Activated CD4-positive, alpha-beta memory T cell treated with anti-CD3 and anti-CD28 coated beads for 36 hours (primary cell): ENCODE measurements at regions of chr13 and their contacts with region 1.

Region 1: GRCh38 chr13:50081679-50082425 is 66.6 kb downstream of the KCNRG start:
- DNase-seq: peak; percentile 99
- H3K4me3 Mint-ChIP-seq: peak overlapping the region; percentile 99
- H3K27ac Mint-ChIP-seq: peak overlapping the region; percentile 100
- H3K4me1 Mint-ChIP-seq: peaks cover 41% of the 10 kb centered on the region
- H3K27me3 Mint-ChIP-seq: peaks cover 4% of the 10 kb centered on the region

Region 2: DNA sequence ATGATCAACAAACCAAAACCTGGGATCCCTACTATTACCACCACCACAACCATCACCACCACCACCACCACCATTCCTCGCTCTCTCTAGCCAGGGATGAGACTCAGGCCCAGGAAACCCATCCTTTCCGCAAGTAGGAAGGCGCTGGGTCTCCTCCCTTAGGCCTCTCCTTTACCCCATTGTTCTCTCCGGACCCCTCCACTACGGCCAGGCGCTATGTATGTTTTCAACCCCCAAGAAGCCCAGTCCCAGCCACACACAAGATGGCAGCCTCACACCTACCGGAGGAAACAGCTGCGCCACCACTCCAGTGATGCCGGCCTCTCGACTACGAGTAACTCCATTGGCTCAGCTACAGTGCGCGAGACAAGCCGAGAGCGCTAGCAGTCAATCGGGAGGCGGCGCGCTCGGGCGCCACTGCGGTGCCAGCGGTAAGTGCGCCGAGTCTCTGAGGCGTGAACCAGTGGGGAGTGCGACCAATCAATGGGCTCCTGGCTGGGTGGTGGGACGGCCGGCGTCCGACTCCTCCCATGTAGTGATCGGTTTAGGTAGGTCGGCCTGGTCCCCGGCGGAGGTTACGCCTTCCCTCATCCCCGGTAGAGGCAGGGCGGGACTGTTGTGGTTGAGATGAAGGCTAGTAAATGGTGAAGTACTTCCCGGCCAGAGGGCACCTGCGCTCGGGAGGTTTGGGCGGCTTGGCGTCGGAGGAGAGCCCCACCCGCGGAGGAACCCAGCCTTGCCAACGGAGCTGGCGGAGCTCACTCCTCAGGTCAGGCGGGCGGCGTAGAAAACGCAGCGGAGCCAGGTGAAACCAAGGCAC is 637.9 kb before region 1 on chr13 and contains the starts of genes CAB39L and SETDB2:
- CTCF ChIA-PET with region 1: interaction called, 3 read pairs
- POLR2A ChIA-PET with region 1: no interaction called
- intact Hi-C with region 1: loop called (anchors 10 kb)
- DNase-seq: peak; percentile 100
- H3K4me3 Mint-ChIP-seq: peak within 1 kb of the TSS; percentile 85
- H3K27ac Mint-ChIP-seq: peak within 1 kb of the TSS; percentile 94
- H3K4me1 Mint-ChIP-seq: peaks cover 62% of the 10 kb centered on the region
- H3K27me3 Mint-ChIP-seq: no peaks in the 10 kb centered on the region
- total RNA-seq, gene CAB39L: 5.6 to 6.3 TPM
- total RNA-seq, gene SETDB2: 13.9 to 15.9 TPM

Region 3: GRCh38 chr13:49652355-49653305 is 429.2 kb before region 1 on chr13:
- CTCF ChIA-PET with region 1: no interaction called
- POLR2A ChIA-PET with region 1: no interaction called
- intact Hi-C with region 1: no loop called
- DNase-seq: peak; percentile 39
- H3K4me3 Mint-ChIP-seq: no peak overlapping the region
- H3K27ac Mint-ChIP-seq: no peak overlapping the region
- H3K4me1 Mint-ChIP-seq: no peaks in the 10 kb centered on the region
- H3K27me3 Mint-ChIP-seq: no peaks in the 10 kb centered on the region

Region 4: DNA sequence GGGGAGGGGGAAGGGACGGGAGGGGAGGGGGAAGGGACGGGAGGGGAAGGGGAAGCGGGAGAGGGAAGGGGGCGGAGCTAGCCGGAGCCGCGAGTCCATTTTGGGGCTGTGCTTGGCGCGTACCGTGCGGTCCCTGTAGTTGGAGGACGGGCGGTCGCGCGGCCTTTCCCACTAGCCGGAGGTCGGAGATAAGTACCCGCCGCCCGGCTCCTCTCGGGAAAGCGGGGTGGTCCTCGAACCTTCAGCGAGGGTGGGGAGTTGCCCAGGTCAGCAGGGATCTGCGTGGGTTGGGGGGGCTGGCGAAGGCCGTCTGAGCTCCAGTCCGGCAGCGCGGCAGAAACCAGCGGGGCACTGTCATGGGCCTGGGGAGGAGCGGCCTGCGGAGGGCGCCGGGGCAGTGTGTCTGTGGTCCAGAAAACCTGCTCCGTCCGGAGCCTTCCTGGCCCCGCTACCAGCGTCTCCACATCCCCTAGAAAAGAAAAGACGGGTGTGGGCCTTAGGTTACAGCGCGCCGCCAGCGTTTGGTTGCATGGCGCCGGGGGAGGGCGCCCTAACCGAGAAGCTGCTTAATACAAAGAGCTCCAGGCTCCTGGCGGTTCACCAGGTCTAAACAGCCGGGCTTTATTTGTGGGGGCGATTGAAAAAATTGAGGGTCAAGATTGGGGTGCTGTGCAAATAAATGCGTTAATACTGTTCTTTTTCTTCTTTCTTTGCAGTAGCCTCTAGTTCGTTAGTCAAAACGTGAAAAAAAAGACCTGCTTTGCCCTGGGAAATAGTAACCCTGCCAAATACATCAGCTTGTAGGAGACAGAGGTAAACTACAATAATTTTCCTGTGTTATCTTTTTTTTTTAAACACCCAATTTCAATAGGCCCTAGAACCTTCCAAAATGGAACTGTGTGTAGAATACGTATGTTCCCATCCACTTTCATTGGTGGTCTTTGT is 84.6 kb before region 1 on chr13 and contains the start of gene TRIM13:
- CTCF ChIA-PET with region 1: interaction called, 51 read pairs
- POLR2A ChIA-PET with region 1: interaction called, 38 read pairs
- intact Hi-C with region 1: loop called (anchors 1 kb)
- DNase-seq: peak; percentile 88
- H3K4me3 Mint-ChIP-seq: peak within 1 kb of the TSS; percentile 81
- H3K27ac Mint-ChIP-seq: peak within 1 kb of the TSS; percentile 86
- H3K4me1 Mint-ChIP-seq: peaks cover 44% of the 10 kb centered on the region
- H3K27me3 Mint-ChIP-seq: no peaks in the 10 kb centered on the region
- total RNA-seq, gene TRIM13: 9.8 to 11.6 TPM

Region 5: DNA sequence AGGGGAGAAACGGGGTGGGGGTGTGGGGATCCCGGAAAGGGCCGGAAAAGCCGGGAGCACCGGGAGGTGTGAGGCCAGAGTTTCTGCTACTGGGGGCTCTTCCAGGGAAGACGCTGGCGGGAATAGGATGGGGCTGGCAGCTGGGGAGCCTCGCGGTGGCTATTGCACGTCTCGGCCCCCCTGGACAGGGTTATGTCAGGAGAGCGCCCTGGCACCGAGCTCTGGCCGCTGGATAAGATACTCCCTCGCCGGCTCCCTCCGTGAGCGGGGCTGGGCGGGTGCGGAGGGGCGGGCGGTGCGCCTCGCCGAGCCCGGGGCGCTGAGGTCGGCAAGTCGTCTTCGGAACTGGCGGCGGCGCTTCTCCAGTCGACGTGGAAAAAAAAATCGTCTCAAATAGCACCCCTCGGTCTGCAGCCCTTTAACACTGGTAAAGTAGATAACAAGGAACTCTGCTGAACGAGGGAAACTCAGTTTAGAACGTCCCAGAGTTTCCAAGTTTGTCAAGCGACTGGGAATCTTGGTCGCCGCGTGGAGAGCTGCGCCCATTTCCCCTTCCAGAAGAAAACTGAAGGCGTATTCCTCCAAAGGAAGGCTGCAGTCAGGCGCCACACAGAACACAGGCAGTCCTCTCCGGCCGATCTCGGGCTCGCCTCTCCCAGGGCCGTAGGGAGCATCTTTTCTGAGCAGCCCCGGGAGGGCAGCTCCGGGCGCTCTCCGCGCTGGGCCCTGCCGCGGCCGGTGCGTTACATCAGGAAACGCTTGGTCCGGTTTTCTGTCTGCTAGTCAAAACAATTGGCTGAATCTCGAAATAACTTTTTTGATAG is 48.5 kb after region 1 on chr13:
- CTCF ChIA-PET with region 1: interaction called, 36 read pairs
- POLR2A ChIA-PET with region 1: interaction called, 132 read pairs
- intact Hi-C with region 1: no loop called
- DNase-seq: peak; percentile 42
- H3K4me3 Mint-ChIP-seq: peak overlapping the region; percentile 66
- H3K27ac Mint-ChIP-seq: peak overlapping the region; percentile 8
- H3K4me1 Mint-ChIP-seq: peaks cover 63% of the 10 kb centered on the region
- H3K27me3 Mint-ChIP-seq: peaks cover 64% of the 10 kb centered on the region

Region 6: DNA sequence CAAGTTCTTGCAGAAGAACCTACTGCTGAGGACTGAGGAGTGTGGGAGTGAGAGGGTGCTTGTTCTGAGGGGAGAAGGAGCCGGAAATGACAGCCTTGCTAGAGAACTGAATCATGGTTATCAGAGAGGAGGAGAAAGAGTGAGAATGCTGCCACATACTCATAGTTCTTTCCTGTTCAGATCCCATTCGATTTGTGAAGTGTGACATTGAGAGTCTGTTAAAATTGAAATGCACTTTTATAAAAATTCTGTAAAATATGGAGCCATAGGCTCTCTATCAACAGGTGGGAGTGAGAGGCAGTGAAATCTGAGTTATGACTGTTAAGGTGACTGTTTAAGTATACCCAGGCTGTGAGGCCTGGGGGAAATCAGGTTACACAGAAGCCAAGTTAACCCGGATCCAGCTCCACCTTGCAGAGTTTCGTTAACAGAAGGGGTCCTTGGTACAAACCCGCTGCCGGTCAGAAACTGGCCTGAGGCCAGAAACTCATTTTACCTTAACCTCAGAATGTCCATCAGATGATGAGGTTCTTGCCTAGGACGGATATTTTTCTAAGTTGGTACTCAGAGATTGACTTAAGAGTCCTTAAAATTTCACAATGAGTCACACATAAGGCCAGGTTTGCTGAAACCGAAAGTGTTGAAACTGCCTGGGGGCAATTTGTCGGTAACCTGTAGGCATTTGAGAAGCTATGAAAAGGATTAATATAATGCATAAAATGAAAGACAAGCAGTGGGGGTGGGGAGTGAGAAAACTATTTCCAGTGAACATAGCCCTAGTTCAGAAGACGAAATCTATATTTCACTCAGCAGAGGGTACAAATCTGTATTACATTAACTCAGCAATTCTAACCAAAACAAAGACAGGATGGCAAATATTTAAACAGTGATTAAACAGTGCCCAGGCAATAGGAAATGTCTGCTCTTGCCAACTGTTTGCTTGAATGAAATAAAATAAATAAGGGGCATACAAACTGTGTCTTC is 283.8 kb after region 1 on chr13:
- CTCF ChIA-PET with region 1: no interaction called
- POLR2A ChIA-PET with region 1: interaction called, 3 read pairs
- intact Hi-C with region 1: loop called (anchors 1 kb)
- DNase-seq: peak; percentile 76
- H3K4me3 Mint-ChIP-seq: peak overlapping the region; percentile 54
- H3K27ac Mint-ChIP-seq: peak overlapping the region; percentile 59
- H3K4me1 Mint-ChIP-seq: peaks cover 53% of the 10 kb centered on the region
- H3K27me3 Mint-ChIP-seq: peaks cover 15% of the 10 kb centered on the region

Region 7: GRCh38 chr13:50801087-50801931 is 719.5 kb after region 1 on chr13:
- CTCF ChIA-PET with region 1: interaction called, 7 read pairs
- POLR2A ChIA-PET with region 1: no interaction called
- intact Hi-C with region 1: loop called (anchors 1 kb)
- DNase-seq: peak; percentile 70
- H3K4me3 Mint-ChIP-seq: no peak overlapping the region
- H3K27ac Mint-ChIP-seq: no peak overlapping the region
- H3K4me1 Mint-ChIP-seq: peaks cover 4% of the 10 kb centered on the region
- H3K27me3 Mint-ChIP-seq: peaks cover 1% of the 10 kb centered on the region

Region 8: DNA sequence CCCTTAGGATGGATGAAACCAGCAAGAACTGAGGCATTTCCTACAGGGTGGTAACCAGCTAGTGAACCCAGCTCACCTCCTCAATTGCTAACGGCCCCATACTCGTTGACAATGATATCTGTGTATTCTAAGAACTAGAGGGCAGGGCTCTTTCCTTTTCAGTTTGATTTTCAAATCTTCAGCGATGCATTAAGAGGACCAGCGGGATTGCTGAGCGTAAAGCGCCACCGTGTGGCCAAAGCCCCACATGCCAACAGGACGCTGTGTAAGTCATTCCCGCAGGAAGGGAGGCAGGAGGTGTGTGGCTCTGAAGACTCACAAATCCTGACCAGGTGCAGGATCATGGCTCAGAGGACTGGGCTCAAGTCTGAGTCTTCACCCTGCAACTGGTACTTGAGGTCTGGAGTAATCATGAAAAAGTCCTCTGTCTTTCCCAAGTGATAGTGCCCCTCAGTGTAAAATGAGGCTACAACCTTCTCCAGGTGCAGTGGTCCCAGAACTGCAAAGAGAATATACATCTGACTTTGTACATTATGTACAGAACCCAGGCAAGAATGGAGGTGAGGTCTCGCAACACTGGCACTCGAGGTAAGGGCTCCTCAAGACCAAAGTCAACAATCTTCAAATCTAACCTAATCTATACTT is 988.3 kb after region 1 on chr13:
- CTCF ChIA-PET with region 1: no interaction called
- POLR2A ChIA-PET with region 1: no interaction called
- intact Hi-C with region 1: loop called (anchors 1 kb)
- DNase-seq: peak; percentile 86
- H3K4me3 Mint-ChIP-seq: no peak overlapping the region
- H3K27ac Mint-ChIP-seq: no peak overlapping the region
- H3K4me1 Mint-ChIP-seq: peaks cover 5% of the 10 kb centered on the region
- H3K27me3 Mint-ChIP-seq: peaks cover 18% of the 10 kb centered on the region